HEK293T (cell line): ENCODE measurements at regions of chr7 and their contacts with region 1.

Region 1: GRCh38 chr7:141654551-141654950 is 47.4 kb downstream of the DENND11 start:
- DNase-seq: peak; percentile 83

Region 2: GRCh38 chr7:141634065-141634464 is 20.5 kb before region 1 on chr7:
- CTCF ChIA-PET with region 1: interaction called, 10 read pairs
- POLR2A ChIA-PET with region 1: no interaction called
- DNase-seq: no peak

Region 3: DNA sequence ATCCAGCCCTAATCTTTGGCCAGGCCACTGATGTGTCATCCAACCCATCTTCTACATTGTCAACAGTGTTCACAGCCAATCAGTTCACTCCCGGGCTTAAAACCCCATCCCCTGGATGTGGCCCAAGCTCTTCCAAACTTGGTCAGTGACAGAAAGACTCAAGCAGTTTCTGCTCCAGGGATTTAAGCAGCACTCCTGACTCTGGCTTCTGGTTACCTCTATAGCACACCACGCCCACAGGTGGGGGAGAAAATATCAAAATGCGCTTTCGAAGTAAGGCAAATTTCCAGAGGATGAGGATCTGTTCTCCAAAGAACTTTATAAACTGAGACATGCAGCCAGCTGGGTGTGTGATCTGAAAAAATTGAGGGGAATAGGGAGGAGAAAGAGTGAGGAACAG is 11.5 kb after region 1 on chr7:
- CTCF ChIA-PET with region 1: interaction called, 12 read pairs
- POLR2A ChIA-PET with region 1: no interaction called
- DNase-seq: no peak

Region 4: DNA sequence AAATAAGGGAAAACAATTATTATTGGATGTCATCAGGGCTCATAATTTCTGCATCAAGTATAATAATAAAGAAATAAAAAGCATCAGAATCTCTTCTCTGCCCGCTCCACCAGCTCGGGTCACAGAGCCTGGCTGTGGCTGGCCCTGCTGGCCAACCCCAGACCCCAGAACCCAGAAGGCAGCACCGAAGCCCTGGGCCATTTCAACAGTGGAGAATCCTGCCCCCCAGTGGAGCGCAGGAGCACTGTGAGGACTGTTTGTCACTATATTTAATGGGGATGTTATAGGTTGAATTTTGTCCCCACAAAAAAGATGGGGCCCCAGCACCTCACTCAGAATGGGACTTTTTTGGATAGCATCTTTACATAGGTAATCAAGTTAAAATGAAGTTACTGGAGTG is 20.2 kb after region 1 on chr7:
- CTCF ChIA-PET with region 1: interaction called, 12 read pairs
- POLR2A ChIA-PET with region 1: no interaction called
- DNase-seq: peak; percentile 53